Activated CD4-positive, alpha-beta T cell treated with anti-CD3 and anti-CD28 coated beads for 36 hours (primary cell): ENCODE measurements at regions of chr4 and their contacts with region 1.

Region 1: DNA sequence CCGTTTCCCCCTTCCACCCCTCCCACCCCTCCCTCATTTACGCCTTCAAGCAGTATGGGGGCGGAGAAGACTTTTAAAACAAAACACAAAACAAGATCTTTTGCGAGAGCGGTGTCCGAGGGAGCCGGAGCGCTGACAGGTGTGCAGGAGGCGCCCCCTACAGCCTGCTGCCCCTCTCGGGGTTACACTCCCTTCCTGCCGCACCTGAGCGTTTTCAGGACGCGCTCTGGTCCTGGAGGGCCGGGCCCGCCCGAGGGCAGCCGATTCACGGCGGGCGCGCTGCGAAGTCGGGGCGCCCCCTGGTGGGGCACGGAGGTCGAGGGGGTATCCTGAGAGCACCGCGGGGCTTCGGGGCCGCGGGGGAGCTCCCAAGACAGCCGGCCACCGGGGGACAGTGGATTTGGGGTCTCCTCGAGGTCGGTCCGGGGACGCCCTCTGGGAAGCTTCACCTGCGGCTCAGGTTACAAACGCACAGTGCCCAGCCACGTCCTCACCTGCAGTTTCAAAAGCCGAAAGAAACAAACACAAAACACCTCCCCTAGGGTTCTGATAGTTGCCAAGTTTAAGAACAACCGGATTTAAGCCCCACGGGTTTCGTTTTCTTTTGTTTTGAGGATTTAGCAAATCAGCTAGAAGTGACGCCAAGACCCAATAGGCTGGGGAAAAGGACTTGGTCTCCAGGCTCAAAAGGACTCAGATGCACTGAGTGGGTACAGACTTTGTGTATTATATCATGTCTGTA is 8.0 kb upstream of the NEUROG2 start:
- DNase-seq: peak; percentile 89
- ATAC-seq: peak; percentile 92
- H3K4me3 Mint-ChIP-seq: peak overlapping the region; percentile 72
- H3K27ac Mint-ChIP-seq: no peak overlapping the region
- H3K4me1 Mint-ChIP-seq: peaks cover 22% of the 10 kb centered on the region
- H3K27me3 Mint-ChIP-seq: peaks cover 47% of the 10 kb centered on the region

Region 2: DNA sequence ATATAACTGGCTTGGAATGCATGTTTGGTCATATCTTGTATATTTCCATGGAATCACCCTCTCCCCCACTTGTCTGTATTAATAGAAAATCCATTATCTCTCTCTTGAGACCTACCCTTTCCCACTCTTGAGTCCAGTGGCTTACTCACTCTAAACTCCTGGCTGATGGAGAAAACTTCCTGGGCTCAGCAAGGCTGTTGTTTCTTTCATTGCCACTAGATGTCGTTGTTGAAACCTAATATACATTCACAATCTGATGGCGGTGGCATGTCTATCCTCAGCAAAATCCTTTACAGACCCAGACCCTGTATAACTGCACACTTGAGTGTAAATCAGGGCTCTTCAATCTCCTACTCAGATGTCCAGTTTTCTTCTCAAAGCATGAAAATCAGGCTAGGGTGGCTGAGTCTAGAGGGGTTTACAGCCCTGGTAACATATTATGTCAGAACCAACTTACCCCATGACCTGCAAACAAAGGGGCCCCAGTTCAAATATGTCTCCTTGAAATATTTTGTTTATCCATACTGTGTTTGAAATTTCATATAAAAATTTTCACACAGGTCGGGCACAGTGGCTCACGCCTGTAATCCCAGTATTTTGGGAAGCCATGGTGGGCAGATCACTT is 448.7 kb before region 1 on chr4:
- CTCF ChIA-PET with region 1: interaction called, 4 read pairs
- POLR2A ChIA-PET with region 1: no interaction called
- intact Hi-C with region 1: loop called (anchors 1 to 5 kb)
- DNase-seq: peak; percentile 33
- ATAC-seq: peak; percentile 74
- H3K4me3 Mint-ChIP-seq: no peak overlapping the region
- H3K27ac Mint-ChIP-seq: no peak overlapping the region
- H3K4me1 Mint-ChIP-seq: no peaks in the 10 kb centered on the region
- H3K27me3 Mint-ChIP-seq: peaks cover 4% of the 10 kb centered on the region

Region 3: GRCh38 chr4:112199040-112199439 is 324.9 kb before region 1 on chr4:
- CTCF ChIA-PET with region 1: no interaction called
- POLR2A ChIA-PET with region 1: no interaction called
- intact Hi-C with region 1: loop called in 1 of 2 experiments (anchors 2 kb)
- DNase-seq: no peak
- ATAC-seq: peak; percentile 10
- H3K4me3 Mint-ChIP-seq: no peak overlapping the region
- H3K27ac Mint-ChIP-seq: peak overlapping the region; percentile 42
- H3K4me1 Mint-ChIP-seq: peaks cover 20% of the 10 kb centered on the region
- H3K27me3 Mint-ChIP-seq: peaks cover 4% of the 10 kb centered on the region

Region 4: DNA sequence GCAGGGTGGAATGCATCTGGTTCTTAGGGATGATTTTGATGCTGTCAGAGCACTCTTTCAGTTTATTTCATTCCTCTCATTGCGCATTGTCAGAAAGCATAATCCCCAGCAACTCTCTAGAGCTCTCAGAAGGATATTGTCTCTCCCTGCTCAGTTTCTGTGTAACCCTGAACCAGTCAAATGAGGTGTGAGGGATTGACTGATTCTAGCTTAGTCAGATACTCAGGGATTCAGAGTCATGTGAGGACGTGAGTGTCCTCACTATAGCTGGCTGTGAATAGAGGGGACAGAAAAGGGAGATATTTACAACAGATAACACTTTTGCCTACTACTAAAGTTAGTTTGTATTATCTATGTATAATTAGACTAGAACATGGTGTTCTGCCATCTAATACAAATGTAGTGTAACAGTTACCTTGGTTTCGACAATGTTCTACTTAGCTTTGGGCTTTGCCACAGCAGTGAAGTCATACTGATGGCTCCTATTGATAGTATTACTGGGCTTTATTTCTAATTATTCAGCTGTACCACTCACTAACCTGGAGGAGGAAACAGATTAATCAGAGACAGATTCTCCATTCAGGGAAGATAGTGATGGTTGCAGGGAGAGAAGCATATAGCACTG is 272.8 kb before region 1 on chr4:
- CTCF ChIA-PET with region 1: no interaction called
- POLR2A ChIA-PET with region 1: no interaction called
- intact Hi-C with region 1: no loop called
- DNase-seq: no peak
- ATAC-seq: peak; percentile 69
- H3K4me3 Mint-ChIP-seq: no peak overlapping the region
- H3K27ac Mint-ChIP-seq: no peak overlapping the region
- H3K4me1 Mint-ChIP-seq: peaks cover 4% of the 10 kb centered on the region
- H3K27me3 Mint-ChIP-seq: no peaks in the 10 kb centered on the region

Region 5: DNA sequence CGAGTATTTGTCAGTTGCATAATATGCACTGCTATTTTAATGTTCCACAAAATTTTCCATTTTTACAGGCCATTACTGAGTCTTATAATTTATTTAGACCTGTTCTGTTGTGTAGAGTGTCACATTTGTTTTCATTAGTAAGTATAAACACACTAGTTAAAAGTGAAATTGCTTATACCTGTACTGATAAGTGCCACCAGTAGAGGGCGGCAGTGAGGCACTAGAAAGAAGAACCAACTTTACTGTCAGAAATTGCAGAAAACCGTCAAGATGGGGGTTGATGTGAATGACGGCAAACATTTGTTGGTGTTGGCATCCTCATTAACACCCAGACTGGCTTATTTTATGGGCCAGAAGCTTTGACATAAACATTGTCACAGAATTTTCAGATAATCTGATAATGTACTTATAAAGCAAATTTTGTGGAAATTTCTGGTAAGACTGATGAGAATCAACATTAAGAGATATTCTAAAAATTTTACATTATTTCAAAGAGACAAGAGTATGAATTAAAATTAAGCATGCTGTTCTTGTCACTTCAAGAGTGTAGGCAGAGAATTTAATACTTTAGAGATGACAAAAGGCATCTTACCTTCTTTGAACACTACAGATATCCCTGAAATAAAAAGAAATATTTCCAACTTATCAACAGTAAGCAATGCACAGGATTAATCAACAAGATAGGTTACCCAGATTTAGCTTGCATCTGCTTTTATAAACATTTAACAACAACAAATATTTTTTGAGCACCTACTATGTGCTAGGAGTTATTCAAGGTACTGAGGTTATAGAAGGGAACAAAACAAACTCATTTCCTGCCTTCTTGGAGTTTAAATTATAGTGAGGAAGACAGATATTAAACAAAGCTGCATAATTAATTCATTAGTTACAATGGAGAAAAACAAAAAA is 201.9 kb before region 1 on chr4:
- CTCF ChIA-PET with region 1: interaction called, 34 read pairs
- POLR2A ChIA-PET with region 1: no interaction called
- intact Hi-C with region 1: loop called in 1 of 2 experiments (anchors 2 kb)
- DNase-seq: peak; percentile 89
- ATAC-seq: peak; percentile 75
- H3K4me3 Mint-ChIP-seq: no peak overlapping the region
- H3K27ac Mint-ChIP-seq: no peak overlapping the region
- H3K4me1 Mint-ChIP-seq: peaks cover 11% of the 10 kb centered on the region
- H3K27me3 Mint-ChIP-seq: no peaks in the 10 kb centered on the region

Region 6: DNA sequence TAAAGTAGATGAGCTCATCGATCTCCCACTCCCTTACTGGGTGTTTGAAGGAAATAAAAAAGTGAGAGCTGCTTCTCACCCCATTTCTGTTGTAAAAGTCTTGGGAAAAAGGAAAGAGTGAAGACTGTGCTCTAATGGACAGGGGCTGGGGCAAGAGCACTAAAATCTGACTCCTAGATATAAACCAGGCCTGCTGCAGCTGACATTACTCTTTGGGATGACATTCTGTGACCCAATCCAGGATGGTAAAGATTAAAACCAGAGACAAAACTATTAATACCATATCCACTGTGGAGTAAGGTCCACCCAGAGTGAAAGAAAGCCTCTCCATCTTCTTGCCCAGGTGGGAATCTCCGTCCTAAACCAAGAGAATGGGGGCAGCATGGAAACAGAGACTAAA is 12.2 kb after region 1 on chr4:
- CTCF ChIA-PET with region 1: interaction called, 20 read pairs
- POLR2A ChIA-PET with region 1: no interaction called
- intact Hi-C with region 1: no loop called
- DNase-seq: no peak
- ATAC-seq: no peak
- H3K4me3 Mint-ChIP-seq: no peak overlapping the region
- H3K27ac Mint-ChIP-seq: no peak overlapping the region
- H3K4me1 Mint-ChIP-seq: no peaks in the 10 kb centered on the region
- H3K27me3 Mint-ChIP-seq: peaks cover 4% of the 10 kb centered on the region